IMR-90 (cell line): ENCODE measurements at regions of chr11 and their contacts with region 1.

Region 1: DNA sequence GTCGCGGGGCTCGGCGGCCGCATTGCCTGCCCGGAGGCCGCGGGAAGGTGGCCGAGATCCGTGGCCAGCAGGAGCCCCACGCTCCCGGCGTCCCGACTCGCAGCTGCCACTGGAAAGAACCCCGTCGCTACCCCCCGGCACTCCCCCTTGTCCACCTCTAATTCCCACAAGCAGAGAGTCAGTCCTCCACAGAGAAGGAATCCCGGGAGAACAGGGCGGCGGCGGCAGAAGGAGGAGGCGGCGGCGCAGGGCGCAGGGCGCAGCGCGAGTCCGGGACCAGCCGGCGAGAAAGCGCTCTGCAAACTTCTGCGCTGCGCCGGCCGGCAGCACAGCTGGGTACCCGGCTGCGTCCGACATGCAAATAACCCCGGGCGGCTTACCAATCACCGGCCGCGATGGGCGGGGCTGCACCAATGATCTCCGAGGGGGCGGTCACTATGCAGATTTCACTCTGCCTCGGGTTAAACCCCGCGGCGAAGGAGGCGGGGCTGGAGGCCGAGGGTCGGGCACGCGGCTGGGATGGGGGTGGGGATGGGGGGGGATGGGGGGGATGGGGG is at the start of gene ABTB2:
- DNase-seq: peak; percentile 96
- ATAC-seq: peak; percentile 92
- H3K4me3 ChIP-seq: peak within 1 kb of the TSS; percentile 55
- H3K27ac ChIP-seq: no peak within 1 kb of the TSS; the same call in 1 of the 2 replicates
- H3K4me1 ChIP-seq: peaks cover 6% of the 10 kb centered on the region; the same call in 1 of the 2 replicates
- H3K27me3 ChIP-seq: peaks cover 22% of the 10 kb centered on the region
- CTCF ChIP-seq: no peak
- POLR2A ChIP-seq: peak; percentile 83
- RAD21 ChIP-seq: peak; percentile 18; the same call in 1 of the 2 replicates
- total RNA-seq, gene ABTB2: 0.18 and 0.28 TPM in 2 replicates

Region 2: DNA sequence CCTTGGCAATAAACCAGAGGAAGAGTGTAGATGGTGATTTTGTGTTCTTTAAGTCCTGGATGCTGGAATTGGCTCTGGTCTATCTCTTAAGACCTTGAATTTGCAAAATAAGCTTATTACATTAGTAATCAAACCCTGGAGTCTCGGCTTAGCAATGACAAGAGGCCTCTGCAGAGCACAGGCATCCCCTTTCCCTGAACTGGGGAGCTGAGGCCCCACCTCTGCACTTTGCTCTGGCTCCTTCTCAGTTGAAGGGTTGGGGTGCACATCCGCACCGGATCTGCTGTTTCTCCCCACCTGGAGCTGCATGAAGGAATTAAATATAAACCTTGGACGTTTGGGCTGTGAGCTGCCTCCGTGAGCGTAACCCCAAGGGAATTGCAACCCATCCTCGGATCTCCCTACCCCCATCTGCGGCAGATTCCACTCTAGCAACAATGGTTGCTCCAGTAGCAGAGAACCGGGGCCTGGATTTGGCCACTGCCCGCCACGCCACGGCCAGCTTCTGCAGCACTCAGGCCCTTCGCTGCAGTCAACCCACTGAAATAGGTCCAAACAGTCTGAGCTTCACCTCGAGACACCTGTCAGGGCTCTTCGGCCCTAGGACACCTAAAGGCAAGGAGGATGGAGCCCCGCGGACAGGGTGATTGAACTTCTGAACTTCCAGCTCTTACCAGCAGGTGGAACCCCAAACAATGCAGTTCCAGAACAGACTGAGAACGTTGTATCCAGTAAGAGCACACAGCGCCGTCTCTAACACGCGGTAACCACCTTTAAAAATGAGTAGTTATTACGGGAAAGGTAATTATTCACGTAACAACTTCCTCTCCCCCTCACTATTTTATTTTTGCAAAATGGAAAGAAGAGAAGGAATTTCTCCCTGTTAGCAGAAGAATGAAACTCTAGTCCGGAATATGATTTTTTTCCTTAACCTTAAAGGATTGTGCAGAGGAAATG is 361.0 kb before region 1 on chr11:
- CTCF ChIA-PET with region 1: interaction called, 3 read pairs
- POLR2A ChIA-PET with region 1: no interaction called
- dilution Hi-C with region 1: no loop called
- in situ Hi-C with region 1: loop called (anchors 5 kb)
- intact Hi-C with region 1: loop called (anchors 1 kb)
- DNase-seq: peak; percentile 65
- ATAC-seq: peak; percentile 100
- H3K4me3 ChIP-seq: no peak overlapping the region
- H3K27ac ChIP-seq: no peak overlapping the region
- H3K4me1 ChIP-seq: no peaks in the 10 kb centered on the region
- H3K27me3 ChIP-seq: peaks cover 16% of the 10 kb centered on the region
- CTCF ChIP-seq: peak; percentile 76
- POLR2A ChIP-seq: no peak
- RAD21 ChIP-seq: peak; percentile 80

Region 3: DNA sequence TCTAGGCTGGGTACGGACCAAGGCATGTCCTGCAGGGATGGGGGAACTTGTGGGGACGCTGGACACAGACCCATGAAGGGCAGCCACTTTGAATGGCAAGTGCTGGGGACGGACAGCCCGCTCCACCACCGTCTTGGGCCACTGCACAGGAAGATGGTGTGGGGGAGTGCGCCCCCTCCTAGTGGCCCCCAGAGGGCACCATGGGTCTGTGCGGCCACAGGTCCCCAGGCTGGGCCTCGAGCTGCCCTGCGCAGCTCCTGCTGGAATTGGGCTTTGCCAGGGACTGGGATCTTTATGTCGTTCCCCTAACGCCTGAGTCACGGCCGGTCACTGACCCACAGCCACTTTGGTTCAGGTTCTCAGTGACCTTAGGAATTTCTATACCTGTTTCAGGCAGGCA is 208.0 kb before region 1 on chr11:
- CTCF ChIA-PET with region 1: no interaction called
- POLR2A ChIA-PET with region 1: no interaction called
- dilution Hi-C with region 1: no loop called
- in situ Hi-C with region 1: no loop called
- intact Hi-C with region 1: loop called (anchors 1 kb)
- DNase-seq: no peak
- ATAC-seq: peak; percentile 76; the same call in 1 of the 2 replicates
- H3K4me3 ChIP-seq: no peak overlapping the region
- H3K27ac ChIP-seq: no peak overlapping the region
- H3K4me1 ChIP-seq: no peaks in the 10 kb centered on the region; the same call in 1 of the 2 replicates
- H3K27me3 ChIP-seq: no peaks in the 10 kb centered on the region
- CTCF ChIP-seq: peak; percentile 47
- POLR2A ChIP-seq: no peak
- RAD21 ChIP-seq: peak; percentile 63

Region 4: GRCh38 chr11:34192481-34193401 is 165.0 kb before region 1 on chr11:
- CTCF ChIA-PET with region 1: no interaction called
- POLR2A ChIA-PET with region 1: no interaction called
- dilution Hi-C with region 1: no loop called
- in situ Hi-C with region 1: no loop called
- intact Hi-C with region 1: loop called (anchors 1 kb)
- DNase-seq: peak; percentile 93
- ATAC-seq: peak; percentile 91
- H3K4me3 ChIP-seq: peak overlapping the region; percentile 31; the same call in 1 of the 2 replicates
- H3K27ac ChIP-seq: peak overlapping the region; percentile 67
- H3K4me1 ChIP-seq: peaks cover 9% of the 10 kb centered on the region; the same call in 1 of the 2 replicates
- H3K27me3 ChIP-seq: peaks cover 2% of the 10 kb centered on the region; the same call in 1 of the 2 replicates
- CTCF ChIP-seq: no peak
- POLR2A ChIP-seq: peak; percentile 28; the same call in 1 of the 2 replicates
- RAD21 ChIP-seq: no peak

Region 5: GRCh38 chr11:34427186-34427805 is 69.5 kb after region 1 on chr11:
- CTCF ChIA-PET with region 1: interaction called, 6 read pairs
- POLR2A ChIA-PET with region 1: interaction called, 10 read pairs
- dilution Hi-C with region 1: no loop called
- in situ Hi-C with region 1: no loop called
- intact Hi-C with region 1: no loop called
- DNase-seq: peak; percentile 72
- ATAC-seq: peak; percentile 87
- H3K4me3 ChIP-seq: no peak overlapping the region
- H3K27ac ChIP-seq: peak overlapping the region; percentile 41; the same call in 1 of the 2 replicates
- H3K4me1 ChIP-seq: peaks cover 3% of the 10 kb centered on the region; the same call in 1 of the 2 replicates
- H3K27me3 ChIP-seq: peaks cover 2% of the 10 kb centered on the region; the same call in 1 of the 2 replicates
- CTCF ChIP-seq: no peak
- POLR2A ChIP-seq: no peak
- RAD21 ChIP-seq: no peak

Region 6: GRCh38 chr11:34480314-34480713 is 122.5 kb after region 1 on chr11:
- CTCF ChIA-PET with region 1: no interaction called
- POLR2A ChIA-PET with region 1: no interaction called
- dilution Hi-C with region 1: no loop called
- in situ Hi-C with region 1: no loop called
- intact Hi-C with region 1: no loop called
- DNase-seq: peak; percentile 22
- ATAC-seq: no peak
- H3K4me3 ChIP-seq: no peak overlapping the region
- H3K27ac ChIP-seq: no peak overlapping the region
- H3K4me1 ChIP-seq: peaks cover 3% of the 10 kb centered on the region; the same call in 1 of the 2 replicates
- H3K27me3 ChIP-seq: peaks cover 21% of the 10 kb centered on the region
- CTCF ChIP-seq: no peak
- POLR2A ChIP-seq: no peak
- RAD21 ChIP-seq: no peak